Naive thymus-derived CD4-positive, alpha-beta T cell (primary cell): ENCODE measurements at regions of chr3 and their contacts with region 1.

Region 1: DNA sequence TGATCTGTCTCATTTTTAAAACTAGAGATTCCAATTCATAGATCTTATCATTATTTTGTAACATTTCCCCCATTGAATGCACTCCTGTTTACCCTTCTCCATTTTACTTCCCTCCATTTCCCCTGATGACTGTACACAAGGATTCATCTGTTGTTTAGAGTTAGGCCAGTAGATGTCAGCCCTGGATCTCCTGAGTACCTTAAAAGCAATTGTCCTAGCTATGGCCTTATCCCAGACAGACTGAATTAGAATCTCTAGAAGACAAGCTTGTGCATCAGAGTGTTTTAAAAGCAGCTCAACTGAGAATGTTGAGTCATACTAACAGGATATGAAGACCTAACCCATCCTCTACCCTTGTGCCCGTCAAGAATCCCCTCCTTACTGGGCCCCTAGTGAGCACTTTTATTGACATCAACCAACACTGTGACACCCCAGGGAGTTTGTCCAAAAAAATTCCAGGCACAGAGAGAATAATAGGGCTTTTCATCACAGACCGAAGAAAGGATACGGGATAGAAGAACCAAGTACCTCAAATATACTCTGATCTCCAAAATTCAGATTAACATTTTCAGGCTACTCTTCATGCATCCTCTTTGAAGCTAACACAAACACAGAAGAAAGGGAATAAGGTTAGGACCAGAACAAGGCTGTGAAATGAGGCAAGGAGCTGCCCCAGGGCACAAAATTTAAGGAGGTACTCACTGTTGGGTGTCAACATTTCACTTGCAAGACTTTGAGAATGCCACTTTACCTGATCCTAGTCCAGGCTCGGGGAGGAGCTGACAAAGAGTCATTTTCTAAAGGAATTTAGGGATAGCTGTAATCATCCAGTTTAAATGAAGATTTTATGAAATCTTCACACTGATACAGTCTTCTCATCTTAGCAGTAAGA is 17.1 kb downstream of the ZBED2 start:
- DNase-seq: peak in 1 of 9 donors; percentile 7
- ATAC-seq: peak; percentile 71
- H3K4me3 ChIP-seq: no peak overlapping the region
- H3K4me3 Mint-ChIP-seq: peak overlapping the region in 1 of 10 donors; percentile 13
- H3K27ac ChIP-seq: no peak overlapping the region
- H3K27ac Mint-ChIP-seq: peak overlapping the region in 8 of 9 donors; percentile 27 to 83 (median 60)
- H3K4me1 ChIP-seq: no peaks in the 10 kb centered on the region
- H3K4me1 Mint-ChIP-seq: peaks cover 18 to 72% (median 61%) of the 10 kb centered on the region in 7 donors
- H3K27me3 ChIP-seq: no peaks in the 10 kb centered on the region
- H3K27me3 Mint-ChIP-seq: no peaks in the 10 kb centered on the region

Region 2: DNA sequence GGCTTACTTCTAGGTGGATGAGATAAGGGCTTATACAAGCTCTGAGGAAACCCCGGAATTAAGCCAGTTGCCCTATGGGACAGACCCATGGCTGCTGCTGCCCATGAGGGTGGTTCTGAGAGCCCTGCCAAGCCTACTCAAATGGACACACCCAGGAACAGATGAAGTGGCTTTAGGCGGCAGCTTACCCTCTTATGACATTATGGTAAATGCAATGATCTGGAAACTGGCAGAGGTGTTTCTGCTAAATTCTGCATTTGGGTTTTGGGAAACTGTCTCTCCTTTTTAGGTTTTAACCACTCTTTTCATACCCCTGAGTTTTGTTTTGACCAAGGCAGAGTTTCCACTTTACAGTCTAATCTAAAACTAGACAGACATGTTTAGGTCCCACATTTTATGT is 26.1 kb after region 1 on chr3:
- CTCF ChIA-PET with region 1: interaction called, 4 read pairs
- POLR2A ChIA-PET with region 1: no interaction called
- intact Hi-C with region 1: loop called in 1 of 2 experiments (anchors 2 kb)
- DNase-seq: no peak
- ATAC-seq: no peak
- H3K4me3 ChIP-seq: no peak overlapping the region
- H3K4me3 Mint-ChIP-seq: peak overlapping the region in 1 of 10 donors; percentile 53
- H3K27ac ChIP-seq: no peak overlapping the region
- H3K27ac Mint-ChIP-seq: peak overlapping the region in 3 of 9 donors; percentile 11 to 56 (median 21)
- H3K4me1 ChIP-seq: peaks cover 2 to 16% of the 10 kb centered on the region in 2 donors
- H3K4me1 Mint-ChIP-seq: peaks cover 10 to 77% (median 38%) of the 10 kb centered on the region in 7 donors
- H3K27me3 ChIP-seq: no peaks in the 10 kb centered on the region
- H3K27me3 Mint-ChIP-seq: no peaks in the 10 kb centered on the region

Region 3: GRCh38 chr3:111691293-111691909 is 113.4 kb after region 1 on chr3:
- CTCF ChIA-PET with region 1: interaction called, 11 read pairs
- POLR2A ChIA-PET with region 1: no interaction called
- intact Hi-C with region 1: loop called (anchors 1 to 2 kb)
- DNase-seq: peak in 6 of 9 donors; percentile 17 to 46 (median 36)
- ATAC-seq: peak; percentile 64
- H3K4me3 ChIP-seq: no peak overlapping the region
- H3K4me3 Mint-ChIP-seq: no peak overlapping the region
- H3K27ac ChIP-seq: no peak overlapping the region
- H3K27ac Mint-ChIP-seq: peak overlapping the region in 2 of 9 donors; percentile 38 to 62
- H3K4me1 ChIP-seq: peaks cover 5 to 12% of the 10 kb centered on the region in 2 donors
- H3K4me1 Mint-ChIP-seq: peaks cover 5 to 66% (median 58%) of the 10 kb centered on the region in 7 donors
- H3K27me3 ChIP-seq: no peaks in the 10 kb centered on the region
- H3K27me3 Mint-ChIP-seq: no peaks in the 10 kb centered on the region

Region 4: GRCh38 chr3:111967651-111968274 is 389.7 kb after region 1 on chr3:
- CTCF ChIA-PET with region 1: interaction called, 3 read pairs
- POLR2A ChIA-PET with region 1: no interaction called
- intact Hi-C with region 1: loop called in 1 of 2 experiments (anchors 2 kb)
- DNase-seq: peak; percentile 44 to 72 (median 64)
- ATAC-seq: peak; percentile 96
- H3K4me3 ChIP-seq: no peak overlapping the region
- H3K4me3 Mint-ChIP-seq: peak overlapping the region in 2 of 10 donors; percentile 12 to 44
- H3K27ac ChIP-seq: no peak overlapping the region
- H3K27ac Mint-ChIP-seq: peak overlapping the region in 1 of 9 donors; percentile 71
- H3K4me1 ChIP-seq: peaks cover 0 to 4% of the 10 kb centered on the region in 2 donors
- H3K4me1 Mint-ChIP-seq: peaks cover 3 to 13% (median 5%) of the 10 kb centered on the region in 7 donors
- H3K27me3 ChIP-seq: no peaks in the 10 kb centered on the region
- H3K27me3 Mint-ChIP-seq: no peaks in the 10 kb centered on the region